ENCODE measurements at regions of chr18 and their contacts with region 1.

Region 1: GRCh38 chr18:70431203-70431624 is 142.4 kb downstream of the SOCS6 start:
- DNase-seq: no peak
- ATAC-seq: no peak
- H3K4me3 ChIP-seq: no peak overlapping the region
- H3K27ac ChIP-seq: no peak overlapping the region
- H3K4me1 ChIP-seq: peaks cover 0 to 7% of the 10 kb centered on the region in 2 donors
- H3K27me3 ChIP-seq: no peaks in the 10 kb centered on the region
- CTCF ChIP-seq: no peak

Region 2: DNA sequence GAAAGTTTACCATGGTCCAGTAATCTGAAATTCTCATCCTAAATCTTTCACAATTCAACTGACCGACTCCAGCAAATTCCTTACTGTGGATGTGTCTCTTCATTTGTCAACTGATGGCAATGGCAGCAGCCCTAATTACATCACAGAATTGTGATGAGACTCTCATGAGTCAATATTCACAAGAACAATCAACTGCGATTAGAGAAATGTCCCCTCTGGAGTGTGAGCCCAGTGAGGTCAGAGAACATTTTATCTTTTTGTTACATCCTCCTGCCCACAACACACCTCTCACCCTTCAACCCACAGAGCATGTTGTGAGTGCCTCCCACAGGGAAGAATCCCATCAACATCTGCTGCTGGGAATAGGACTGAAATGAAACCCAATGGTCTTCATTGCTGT is 557.2 kb before region 1 on chr18:
- intact Hi-C with region 1: no loop called
- DNase-seq: no peak
- ATAC-seq: no peak
- H3K4me3 ChIP-seq: no peak overlapping the region
- H3K27ac ChIP-seq: no peak overlapping the region
- H3K4me1 ChIP-seq: no peaks in the 10 kb centered on the region
- H3K27me3 ChIP-seq: no peaks in the 10 kb centered on the region
- CTCF ChIP-seq: no peak

Region 3: GRCh38 chr18:70195852-70196434 is 235.3 kb before region 1 on chr18:
- intact Hi-C with region 1: loop called in 1 of 2 experiments (anchors 5 kb)
- DNase-seq: peak in 2 of 4 donors; percentile 19 to 37
- ATAC-seq: peak; percentile 81
- H3K4me3 ChIP-seq: no peak overlapping the region
- H3K27ac ChIP-seq: no peak overlapping the region
- H3K4me1 ChIP-seq: no peaks in the 10 kb centered on the region
- H3K27me3 ChIP-seq: no peaks in the 10 kb centered on the region
- CTCF ChIP-seq: peak; percentile 74 to 75

Region 4: GRCh38 chr18:70808481-70809056 is 377.4 kb after region 1 on chr18:
- intact Hi-C with region 1: no loop called
- DNase-seq: no peak
- ATAC-seq: no peak
- H3K4me3 ChIP-seq: no peak overlapping the region
- H3K27ac ChIP-seq: no peak overlapping the region
- H3K4me1 ChIP-seq: no peaks in the 10 kb centered on the region
- H3K27me3 ChIP-seq: no peaks in the 10 kb centered on the region
- CTCF ChIP-seq: no peak

Measured in left lung (tissue), 14 donors.